Activated naive CD4-positive, alpha-beta T cell treated with anti-CD3 and anti-CD28 coated beads, Interleukin-2, amount 10 ng/mL, durations not matched to agents 7 days and 5 days (primary cell): ENCODE measurements at regions of chrX and their contacts with region 1.

Region 1: GRCh38 chrX:56729152-56729850 is at the start of gene NBDY:
- DNase-seq: peak; percentile 48
- H3K4me3 Mint-ChIP-seq: peak within 1 kb of the TSS; percentile 83
- H3K27ac Mint-ChIP-seq: peak within 1 kb of the TSS; percentile 85
- H3K4me1 Mint-ChIP-seq: peaks cover 38% of the 10 kb centered on the region
- H3K27me3 Mint-ChIP-seq: no peaks in the 10 kb centered on the region

Region 2: GRCh38 chrX:56281789-56282188 is 447.5 kb before region 1 on chrX:
- CTCF ChIA-PET with region 1: interaction called, 51 read pairs
- DNase-seq: peak; percentile 45
- H3K4me3 Mint-ChIP-seq: no peak overlapping the region
- H3K27ac Mint-ChIP-seq: no peak overlapping the region
- H3K4me1 Mint-ChIP-seq: peaks cover 12% of the 10 kb centered on the region
- H3K27me3 Mint-ChIP-seq: no peaks in the 10 kb centered on the region

Region 3: DNA sequence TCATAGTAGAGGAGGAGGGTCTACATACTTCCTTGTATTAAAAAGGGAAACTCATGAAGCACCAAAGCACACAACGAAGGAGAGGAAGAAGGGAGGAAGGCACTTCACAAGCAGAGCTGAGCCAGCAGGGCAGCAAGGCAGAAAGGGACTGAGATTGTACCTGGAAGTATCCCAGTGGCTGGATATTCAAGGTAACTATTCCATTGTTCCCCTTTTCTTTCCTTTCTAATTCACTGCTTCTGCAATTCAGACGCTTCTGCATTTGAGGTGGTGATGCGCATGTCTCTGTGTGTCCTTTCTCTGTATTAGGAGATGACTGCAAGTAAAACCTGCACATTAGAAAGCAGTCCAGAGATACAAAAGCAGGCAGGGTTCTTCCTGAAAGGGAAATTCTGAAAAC is 111.0 kb before region 1 on chrX:
- CTCF ChIA-PET with region 1: no interaction called
- DNase-seq: no peak
- H3K4me3 Mint-ChIP-seq: no peak overlapping the region
- H3K27ac Mint-ChIP-seq: no peak overlapping the region
- H3K4me1 Mint-ChIP-seq: no peaks in the 10 kb centered on the region
- H3K27me3 Mint-ChIP-seq: no peaks in the 10 kb centered on the region

Region 4: GRCh38 chrX:56764153-56764974 is 35.1 kb after region 1 on chrX:
- CTCF ChIA-PET with region 1: no interaction called
- DNase-seq: peak; percentile 76
- H3K4me3 Mint-ChIP-seq: peak overlapping the region; percentile 66
- H3K27ac Mint-ChIP-seq: peak overlapping the region; percentile 95
- H3K4me1 Mint-ChIP-seq: peaks cover 58% of the 10 kb centered on the region
- H3K27me3 Mint-ChIP-seq: no peaks in the 10 kb centered on the region

Region 5: DNA sequence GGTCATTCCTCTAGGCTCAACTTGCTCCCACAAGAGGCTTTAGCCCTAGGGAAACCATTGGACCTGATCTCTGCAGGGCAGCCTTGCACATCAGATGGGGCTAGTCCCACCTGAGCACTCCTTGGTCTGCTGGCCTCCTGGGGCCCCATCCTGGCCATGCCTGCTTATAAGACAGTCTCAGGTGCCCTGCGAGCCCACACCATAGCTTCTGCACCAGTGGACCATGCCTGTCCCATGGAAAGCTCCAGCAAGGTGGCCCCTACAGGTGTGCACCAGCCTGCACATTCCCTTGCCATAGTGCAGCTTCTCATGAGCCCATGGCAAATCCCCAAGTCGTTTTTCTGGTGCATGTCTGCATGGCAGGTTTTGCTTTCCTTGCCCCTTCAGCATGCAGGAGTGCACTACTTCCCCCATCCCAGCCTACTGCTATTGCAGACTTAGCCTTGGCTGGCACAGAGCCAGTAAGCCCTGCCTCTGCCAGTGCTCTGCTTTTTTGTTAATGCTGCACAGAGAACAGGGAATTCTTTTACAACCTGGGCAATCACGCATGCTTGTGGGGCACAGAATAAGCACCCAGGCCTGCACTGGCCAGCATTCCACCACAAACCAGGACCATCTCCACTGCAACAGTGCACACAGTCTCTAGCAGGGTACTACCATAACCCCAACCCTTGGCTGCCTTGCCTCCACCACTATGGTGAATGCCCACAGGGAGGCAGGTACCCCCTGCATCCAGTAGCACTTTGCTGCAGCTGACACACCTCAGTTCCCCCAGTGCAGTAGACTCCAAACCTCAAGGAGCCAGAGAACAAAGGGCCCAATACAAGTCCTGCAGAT is 537.8 kb after region 1 on chrX:
- CTCF ChIA-PET with region 1: no interaction called
- DNase-seq: no peak
- H3K4me3 Mint-ChIP-seq: no peak overlapping the region
- H3K27ac Mint-ChIP-seq: no peak overlapping the region
- H3K4me1 Mint-ChIP-seq: no peaks in the 10 kb centered on the region
- H3K27me3 Mint-ChIP-seq: no peaks in the 10 kb centered on the region